ENCODE measurements at regions of chr10 and their contacts with region 1.

Region 1: DNA sequence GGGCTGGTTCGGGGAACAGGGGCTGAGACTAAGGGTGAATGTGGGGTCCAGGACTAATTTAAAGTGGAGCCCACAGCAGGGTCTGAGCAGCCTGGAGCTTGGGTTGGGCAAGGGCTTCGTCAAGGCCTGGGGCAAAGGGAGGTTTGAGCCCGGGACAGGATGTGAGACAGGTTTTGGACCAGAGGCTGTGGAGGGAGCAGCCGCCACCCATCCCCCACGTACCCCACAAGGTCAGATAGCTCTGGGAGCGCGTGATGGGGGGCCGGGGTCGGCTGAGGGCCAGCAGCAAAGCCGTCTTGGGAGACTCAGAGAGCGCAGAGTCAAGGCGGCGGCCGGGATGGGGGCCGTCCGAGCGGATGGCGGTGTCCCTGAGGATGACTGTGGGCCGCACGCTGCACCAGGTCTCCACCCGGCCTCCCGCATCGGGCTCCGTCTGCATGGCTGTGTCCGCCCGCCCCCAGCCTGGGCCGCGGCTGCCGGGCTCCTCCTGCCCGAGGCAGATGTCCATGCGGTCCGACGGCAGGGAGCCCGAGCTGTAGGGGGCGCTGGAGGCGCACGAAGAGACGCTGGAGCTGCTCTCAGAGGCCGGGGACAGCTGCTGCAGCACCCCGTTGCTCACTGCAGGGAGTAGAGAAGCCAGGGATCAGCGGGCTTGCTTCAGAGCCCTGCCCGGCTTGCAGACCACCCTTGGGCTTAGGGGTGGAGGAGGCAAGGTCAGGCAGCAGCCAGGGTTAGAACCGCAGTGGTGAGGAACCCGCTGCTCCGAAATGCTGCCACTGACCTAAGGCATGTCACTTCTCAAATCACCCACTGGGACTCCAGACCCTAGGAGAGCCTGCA is 12.1 kb downstream of the PDZD7 start:
- DNase-seq: peak in 1 of 2 experiments; percentile 97
- H3K4me3 ChIP-seq: peak overlapping the region; percentile 33 to 59 (median 42); a peak in 7 of 8 replicates
- H3K27ac ChIP-seq: no peak overlapping the region
- H3K4me1 ChIP-seq: peaks cover 0 to 10% (median 5%) of the 10 kb centered on the region in 4 experiments; a peak in 4 of 7 replicates
- H3K27me3 ChIP-seq: peaks cover 14 to 42% (median 32%) of the 10 kb centered on the region in 4 experiments
- CTCF ChIP-seq: peak; percentile 82 to 92 (median 86)
- EP300 ChIP-seq: no peak
- POLR2A ChIP-seq: no peak
- RAD21 ChIP-seq: peak; percentile 71 to 80

Region 2: GRCh38 chr10:100969187-100970075 is 49.4 kb before region 1 on chr10 and contains the start of gene SEMA4G:
- CTCF ChIA-PET with region 1: interaction called, 32 read pairs
- POLR2A ChIA-PET with region 1: interaction called, 7 read pairs
- DNase-seq: peak; percentile 67 to 90
- H3K4me3 ChIP-seq: peak within 1 kb of the TSS; percentile 67 to 97 (median 72)
- H3K27ac ChIP-seq: no peak within 1 kb of the TSS
- H3K4me1 ChIP-seq: peaks cover 7 to 19% (median 10%) of the 10 kb centered on the region in 4 experiments
- H3K27me3 ChIP-seq: peaks cover 0 to 3% (median 1%) of the 10 kb centered on the region in 4 experiments; a peak in 1 of 7 replicates
- CTCF ChIP-seq: peak; percentile 66 to 80 (median 71)
- EP300 ChIP-seq: no peak
- POLR2A ChIP-seq: no peak
- RAD21 ChIP-seq: peak in 1 of 2 experiments; percentile 36; a peak in 1 of 4 replicates
- total RNA-seq, gene SEMA4G: 7.1 and 7.6 TPM in 2 replicates

Region 3: DNA sequence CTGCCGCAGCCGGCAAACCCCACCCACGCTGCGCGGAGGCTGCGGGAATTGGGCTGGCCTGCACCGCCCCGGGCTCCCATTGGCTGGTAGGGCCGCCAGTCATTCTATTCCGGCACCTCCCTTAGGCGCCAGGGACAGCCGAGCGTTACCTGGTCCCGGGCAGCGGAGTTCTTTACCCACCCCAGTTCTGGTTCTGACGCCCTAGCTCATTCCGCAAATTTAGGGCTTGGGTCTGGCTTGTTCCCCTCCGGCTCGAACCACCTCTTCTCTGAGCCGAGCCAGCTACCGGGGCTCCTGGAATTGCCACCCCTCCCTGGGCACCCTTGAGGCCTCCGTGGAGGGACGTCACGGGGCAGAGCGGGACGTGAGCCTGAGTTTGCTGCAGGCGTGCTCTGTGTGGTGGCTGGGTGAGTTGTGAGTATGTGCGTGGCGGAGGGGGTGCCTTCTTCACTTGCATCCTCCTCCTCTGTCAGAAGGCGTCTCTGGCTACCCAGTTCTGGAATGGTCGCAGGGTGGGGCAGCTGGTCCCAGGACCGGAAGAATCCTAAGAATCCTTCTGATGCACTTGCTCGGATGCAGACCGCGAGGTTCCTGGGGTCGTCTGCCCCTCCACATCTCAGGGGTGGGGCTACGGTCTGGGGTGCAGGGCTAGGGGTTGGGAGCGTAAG is 12.4 kb after region 1 on chr10 and contains the starts of genes PDZD7 and SFXN3:
- CTCF ChIA-PET with region 1: interaction called, 171 read pairs
- POLR2A ChIA-PET with region 1: interaction called, 24 read pairs
- DNase-seq: peak in 1 of 2 experiments; percentile 98
- H3K4me3 ChIP-seq: peak within 1 kb of the TSS; percentile 41 to 66 (median 58)
- H3K27ac ChIP-seq: no peak within 1 kb of the TSS
- H3K4me1 ChIP-seq: peaks cover 0 to 26% (median 21%) of the 10 kb centered on the region in 4 experiments; a peak in 6 of 7 replicates
- H3K27me3 ChIP-seq: peaks cover 1 to 45% (median 36%) of the 10 kb centered on the region in 4 experiments
- CTCF ChIP-seq: no peak
- EP300 ChIP-seq: no peak
- POLR2A ChIP-seq: no peak
- RAD21 ChIP-seq: no peak
- total RNA-seq, gene PDZD7: 0.88 and 1.1 TPM in 2 replicates
- total RNA-seq, gene SFXN3: 2.8 and 3.1 TPM in 2 replicates

Region 4: DNA sequence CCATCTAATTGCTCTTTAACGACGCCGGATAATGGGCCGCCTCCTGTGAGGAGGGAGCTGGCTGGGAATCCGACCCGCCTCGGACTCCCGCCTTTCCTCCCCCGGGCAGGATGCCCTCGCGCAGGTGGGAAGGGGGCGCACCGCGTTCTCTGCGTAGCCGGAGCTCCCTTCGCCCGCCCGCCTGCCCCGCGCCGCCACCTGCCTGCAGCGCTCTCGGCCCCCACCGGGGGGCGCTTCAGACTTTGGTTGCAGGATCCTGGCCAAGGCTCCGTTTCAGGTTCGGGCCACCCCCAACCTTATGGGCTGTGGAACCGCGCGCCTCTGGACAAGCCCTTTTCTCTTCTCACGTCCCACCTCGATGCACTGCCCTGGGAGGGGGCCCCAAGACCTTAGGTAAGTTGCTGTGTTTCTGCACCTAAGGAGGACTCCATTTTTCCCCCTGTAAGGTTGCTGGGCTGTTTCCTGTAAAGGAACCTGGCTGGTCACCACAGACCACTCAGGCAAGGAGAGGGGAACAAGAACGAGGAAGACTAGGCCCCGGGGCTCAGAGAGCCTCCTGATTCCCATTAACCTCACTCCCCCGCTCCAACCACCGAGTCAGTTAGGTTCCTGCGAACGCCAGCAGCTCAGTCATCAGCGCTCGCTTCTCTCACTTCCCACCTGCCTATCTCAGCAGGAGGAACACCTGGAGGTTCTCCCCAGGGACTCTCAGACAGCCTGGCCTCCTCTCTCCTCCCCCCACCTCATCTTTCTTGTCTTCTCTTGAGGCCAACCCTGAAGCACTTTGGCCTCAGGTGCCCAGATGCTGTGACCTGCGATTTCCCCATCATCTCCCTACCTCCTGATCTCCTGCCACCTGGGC is 31.6 kb after region 1 on chr10:
- CTCF ChIA-PET with region 1: interaction called, 2,176 read pairs
- POLR2A ChIA-PET with region 1: interaction called, 5 read pairs
- DNase-seq: peak in 1 of 2 experiments; percentile 99
- H3K4me3 ChIP-seq: peak overlapping the region in 2 of 4 experiments; percentile 10 to 49; a peak in 3 of 8 replicates
- H3K27ac ChIP-seq: no peak overlapping the region
- H3K4me1 ChIP-seq: peaks cover 9 to 23% (median 17%) of the 10 kb centered on the region in 4 experiments
- H3K27me3 ChIP-seq: peaks cover 38 to 66% (median 60%) of the 10 kb centered on the region in 4 experiments
- CTCF ChIP-seq: peak; percentile 73 to 95 (median 84)
- EP300 ChIP-seq: no peak
- POLR2A ChIP-seq: no peak
- RAD21 ChIP-seq: peak; percentile 64 to 74

Region 5: GRCh38 chr10:101067356-101068083 is 48.7 kb after region 1 on chr10:
- CTCF ChIA-PET with region 1: interaction called, 2,176 read pairs
- POLR2A ChIA-PET with region 1: interaction called, 5 read pairs
- DNase-seq: peak in 1 of 2 experiments; percentile 94
- H3K4me3 ChIP-seq: peak overlapping the region; percentile 42 to 90 (median 64)
- H3K27ac ChIP-seq: no peak overlapping the region
- H3K4me1 ChIP-seq: peaks cover 4 to 27% (median 15%) of the 10 kb centered on the region in 4 experiments
- H3K27me3 ChIP-seq: peaks cover 43 to 63% (median 56%) of the 10 kb centered on the region in 4 experiments
- CTCF ChIP-seq: peak; percentile 64 to 93 (median 81)
- EP300 ChIP-seq: no peak
- POLR2A ChIP-seq: no peak
- RAD21 ChIP-seq: peak; percentile 76 to 80

Region 6: GRCh38 chr10:101207026-101207425 is 188.2 kb after region 1 on chr10:
- CTCF ChIA-PET with region 1: no interaction called
- POLR2A ChIA-PET with region 1: no interaction called
- DNase-seq: no peak
- H3K4me3 ChIP-seq: no peak overlapping the region
- H3K27ac ChIP-seq: no peak overlapping the region
- H3K4me1 ChIP-seq: no peaks in the 10 kb centered on the region
- H3K27me3 ChIP-seq: peaks cover 0 to 9% (median 5%) of the 10 kb centered on the region in 4 experiments; a peak in 5 of 7 replicates
- CTCF ChIP-seq: no peak
- EP300 ChIP-seq: no peak
- POLR2A ChIP-seq: no peak
- RAD21 ChIP-seq: no peak

Measured in H1 (cell line).